ENCODE measurements at regions of chr9 and their contacts with region 1.

Region 1: DNA sequence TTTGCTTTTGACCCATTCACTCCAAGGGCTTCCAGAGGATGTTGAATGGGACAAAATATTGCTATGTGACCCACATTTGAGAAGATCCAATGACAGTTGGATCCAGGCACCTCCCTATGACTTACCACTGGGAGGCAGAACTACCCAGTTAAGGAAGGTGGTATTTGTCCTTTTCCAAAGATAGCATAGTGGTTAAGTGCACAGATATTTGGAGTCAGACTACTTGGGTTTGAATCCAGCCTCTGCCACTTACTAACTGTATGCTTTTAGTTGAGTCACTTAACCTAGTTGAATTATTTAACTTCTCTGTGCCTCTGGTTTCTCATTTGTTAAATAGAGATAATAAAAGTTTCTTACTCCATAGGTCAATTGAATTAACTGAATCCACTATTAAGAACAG is 74.5 kb upstream of the PALM2AKAP2 start:
- DNase-seq: no peak

Region 2: GRCh38 chr9:109574068-109574882 is 131.2 kb before region 1 on chr9:
- intact Hi-C with region 1: loop called (anchors 10 kb)
- DNase-seq: no peak

Region 3: GRCh38 chr9:109652964-109653363 is 52.6 kb before region 1 on chr9:
- intact Hi-C with region 1: loop called (anchors 5 kb)
- DNase-seq: no peak

Region 4: DNA sequence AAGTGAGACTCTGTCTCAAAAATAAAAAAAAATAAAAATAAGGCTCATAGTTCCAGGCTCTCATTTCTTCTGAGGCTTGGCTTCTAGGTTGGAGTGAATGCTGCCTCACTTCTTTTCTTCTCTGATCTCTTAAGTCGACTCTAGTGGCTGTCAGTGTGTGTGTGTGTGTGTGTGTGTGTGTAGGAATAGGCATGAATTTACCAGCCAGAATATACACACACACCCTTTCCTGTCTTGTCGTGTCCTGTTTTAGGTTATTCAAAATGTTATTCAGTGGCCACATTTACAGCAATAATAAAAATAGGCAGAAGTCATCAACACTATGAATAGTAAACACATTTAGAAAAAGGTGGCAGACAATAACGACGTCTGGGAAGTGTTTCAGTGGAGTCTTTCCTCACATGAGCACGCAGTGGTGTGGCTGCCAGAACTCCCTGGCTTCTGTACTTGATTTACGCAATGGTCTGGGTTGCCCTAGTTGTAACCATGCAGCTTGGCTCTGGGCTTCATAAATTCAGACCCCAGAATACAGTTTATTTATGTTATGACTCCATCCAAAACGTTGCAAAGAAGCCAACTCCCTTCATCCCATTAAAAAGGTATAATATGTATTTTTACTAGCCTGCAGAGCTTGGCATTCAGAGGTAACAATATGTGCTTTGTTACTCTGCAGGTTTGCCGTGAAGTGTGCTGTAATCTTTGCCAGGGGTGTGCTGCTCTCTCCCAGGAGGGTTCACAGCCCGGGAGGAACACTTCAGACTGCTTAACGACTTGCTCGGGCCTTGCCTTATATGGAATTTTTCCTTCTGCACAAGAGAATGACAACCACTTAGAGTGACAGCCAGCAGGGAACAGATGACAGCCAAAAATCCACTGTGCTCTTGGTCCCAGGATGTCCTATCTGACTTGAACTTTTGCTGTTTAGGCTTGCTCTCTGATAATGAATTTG is 40.1 kb after region 1 on chr9:
- intact Hi-C with region 1: loop called (anchors 2 kb)
- DNase-seq: peak; percentile 78

Region 5: GRCh38 chr9:109771084-109771483 is 65.6 kb after region 1 on chr9:
- intact Hi-C with region 1: loop called (anchors 5 kb)
- DNase-seq: no peak

Region 6: GRCh38 chr9:109817846-109818472 is 112.4 kb after region 1 on chr9:
- intact Hi-C with region 1: loop called (anchors 5 kb)
- DNase-seq: no peak

Region 7: DNA sequence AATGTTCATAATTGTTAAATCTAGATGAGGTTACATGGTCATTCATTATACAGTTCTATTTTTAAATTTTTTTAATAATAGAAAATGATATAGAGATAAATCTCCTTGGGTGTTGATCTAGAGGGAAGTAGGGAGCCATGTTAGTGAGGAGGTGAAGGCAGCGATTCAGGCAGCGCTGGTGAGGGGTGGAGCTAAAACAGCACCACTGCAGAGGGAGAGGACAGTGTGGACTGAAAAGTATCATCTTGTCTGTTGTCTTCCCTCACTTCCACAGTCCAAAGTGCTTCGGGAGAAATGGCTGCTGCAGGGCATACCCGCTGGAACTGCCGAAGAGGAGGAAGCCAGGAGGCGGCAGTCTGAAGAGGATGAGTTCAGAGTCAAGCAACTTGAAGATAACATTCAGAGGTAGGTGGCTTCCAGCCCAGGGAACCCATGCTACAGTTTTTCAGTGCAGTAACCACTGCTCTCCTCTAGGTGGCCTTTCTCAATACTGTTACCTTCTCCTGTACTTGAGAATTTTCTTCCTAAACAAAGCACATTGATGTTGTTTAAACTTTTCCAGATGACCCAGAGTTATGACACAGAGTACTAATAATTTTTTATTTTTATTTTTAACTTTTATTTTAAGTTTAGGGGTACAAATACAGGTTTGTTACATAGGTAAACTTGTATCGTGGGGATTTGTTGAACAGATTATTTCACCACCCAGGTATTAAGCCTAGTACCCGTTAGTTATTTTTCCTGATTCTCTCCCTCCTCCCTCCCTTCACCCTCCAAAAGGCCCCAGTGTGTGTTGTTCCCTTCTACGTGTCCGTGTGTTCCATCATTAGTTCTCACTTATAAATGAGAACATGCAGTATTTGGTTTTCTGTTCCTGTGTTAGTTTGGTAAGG is 175.0 kb after region 1 on chr9:
- intact Hi-C with region 1: loop called (anchors 10 kb)
- DNase-seq: no peak